ENCODE measurements at regions of chr1 and their contacts with region 1.

Region 1: GRCh38 chr1:22754106-22754768 is 43.6 kb downstream of the EPHB2 start:
- DNase-seq: no peak
- ATAC-seq: no peak

Region 2: DNA sequence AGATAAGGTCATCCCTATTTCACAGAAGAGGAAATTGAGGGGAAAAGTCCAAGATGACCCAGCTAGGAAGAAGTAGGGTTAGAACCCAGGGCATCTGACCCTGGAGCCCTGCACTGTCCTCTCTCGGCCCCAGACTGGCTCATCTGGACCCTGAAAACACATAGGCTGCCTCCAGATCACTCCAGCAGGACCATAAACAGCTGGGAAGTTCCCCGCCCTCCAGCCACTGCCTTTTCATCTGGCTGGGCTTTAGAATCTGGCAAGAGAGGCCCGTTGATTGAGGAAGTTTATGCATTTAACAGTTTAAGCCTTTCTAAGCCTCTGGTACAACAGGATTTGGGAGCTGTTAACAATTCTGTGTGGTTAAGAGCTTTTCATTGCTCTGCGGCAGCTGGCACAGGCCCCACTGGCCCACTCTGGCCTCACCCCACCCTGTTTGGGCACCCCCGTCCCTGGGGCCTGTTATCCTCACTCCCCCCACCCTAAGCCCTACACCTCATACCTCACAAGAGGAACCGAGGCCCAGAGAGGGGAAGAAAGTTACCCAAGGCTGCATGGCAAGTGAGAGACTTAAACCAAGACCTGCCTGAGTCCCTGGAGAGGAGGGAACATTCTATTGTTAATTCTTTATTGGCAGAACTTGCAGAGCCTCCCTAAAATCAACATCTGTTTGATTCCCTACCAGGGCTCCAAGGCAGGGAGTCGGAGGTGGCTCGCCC is 40.6 kb after region 1 on chr1:
- intact Hi-C with region 1: loop called (anchors 2 kb)
- DNase-seq: peak; percentile 51
- ATAC-seq: peak; percentile 57